ENCODE measurements at regions of chr20 and their contacts with region 1.

Region 1: GRCh38 chr20:45798935-45799642 is 7.3 kb downstream of the DNTTIP1 start:
- DNase-seq: peak; percentile 11 to 67
- ATAC-seq: peak; percentile 89
- H3K4me3 ChIP-seq: no peak overlapping the region
- H3K27ac ChIP-seq: no peak overlapping the region
- H3K4me1 ChIP-seq: no peaks in the 10 kb centered on the region
- H3K27me3 ChIP-seq: no peaks in the 10 kb centered on the region

Region 2: GRCh38 chr20:45833030-45833882 is 34.2 kb after region 1 on chr20 and contains the start of gene SNX21:
- intact Hi-C with region 1: loop called in 1 of 2 experiments (anchors 5 kb)
- DNase-seq: peak; percentile 91 to 94
- ATAC-seq: peak; percentile 92
- H3K4me3 ChIP-seq: peak within 1 kb of the TSS; percentile 62 to 75
- H3K27ac ChIP-seq: peak within 1 kb of the TSS; percentile 71 to 92
- H3K4me1 ChIP-seq: peaks cover 0 to 1% of the 10 kb centered on the region in 2 donors
- H3K27me3 ChIP-seq: no peaks in the 10 kb centered on the region
- total RNA-seq, gene SNX21: 36.2 to 57.7 TPM

Region 3: GRCh38 chr20:45890985-45891983 is 92.2 kb after region 1 on chr20 and contains the starts of genes CTSA and NEURL2:
- intact Hi-C with region 1: loop called (anchors 5 kb)
- DNase-seq: peak; percentile 94 to 97
- ATAC-seq: peak; percentile 93
- H3K4me3 ChIP-seq: peak within 1 kb of the TSS; percentile 42 to 55
- H3K27ac ChIP-seq: peak within 1 kb of the TSS in 1 of 2 donors; percentile 50
- H3K4me1 ChIP-seq: no peaks in the 10 kb centered on the region
- H3K27me3 ChIP-seq: no peaks in the 10 kb centered on the region
- total RNA-seq, gene CTSA: 83.4 to 140 TPM
- total RNA-seq, gene NEURL2: 9.9 to 32.9 TPM

Region 4: GRCh38 chr20:45934586-45935415 is 135.7 kb after region 1 on chr20 and contains the start of gene PCIF1:
- intact Hi-C with region 1: loop called in 1 of 2 experiments (anchors 10 kb)
- DNase-seq: peak; percentile 99
- ATAC-seq: peak; percentile 96
- H3K4me3 ChIP-seq: peak within 1 kb of the TSS; percentile 59 to 77
- H3K27ac ChIP-seq: peak within 1 kb of the TSS; percentile 80 to 81
- H3K4me1 ChIP-seq: no peaks in the 10 kb centered on the region
- H3K27me3 ChIP-seq: no peaks in the 10 kb centered on the region
- total RNA-seq, gene PCIF1: 32.5 to 33.3 TPM

Region 5: DNA sequence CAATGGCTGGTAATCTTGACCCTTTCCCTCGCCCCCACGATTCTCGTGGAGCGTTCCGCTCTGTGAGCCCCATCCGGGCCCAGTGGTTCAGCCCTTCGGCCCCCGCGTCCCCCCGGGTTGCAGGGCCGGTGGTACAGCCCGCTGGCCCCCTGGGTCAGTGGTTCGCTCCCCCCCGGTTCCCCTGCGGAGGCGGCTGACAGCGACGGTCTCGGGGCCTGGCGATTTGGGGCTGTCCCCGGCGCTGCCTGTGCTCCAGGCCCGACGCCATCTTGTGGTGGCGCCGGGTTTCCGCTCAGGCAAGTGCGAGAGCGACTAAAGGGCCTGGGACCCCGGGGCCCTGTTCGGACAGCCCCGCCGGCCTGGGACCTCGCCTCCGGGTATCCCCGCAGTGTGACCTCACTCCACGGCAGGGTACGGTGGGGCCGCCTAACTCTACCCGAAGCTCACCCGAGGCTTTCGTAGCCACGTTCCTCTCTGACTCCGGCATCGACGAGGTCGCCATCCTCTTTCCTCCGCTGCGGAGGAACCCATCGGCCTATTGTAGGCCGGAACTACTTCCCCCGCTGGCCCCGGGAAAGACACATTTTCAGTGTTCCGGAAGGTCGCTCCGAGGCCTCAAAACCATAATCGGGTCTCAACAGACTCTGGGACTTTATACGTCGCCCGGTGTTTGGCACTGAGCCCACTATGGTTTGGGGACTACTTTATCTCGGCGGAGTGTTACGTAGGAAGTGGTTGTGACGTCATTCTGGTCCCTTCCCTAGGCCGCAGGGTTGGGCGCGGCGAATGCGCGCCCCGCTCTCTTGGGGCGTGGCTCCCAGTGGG is 172.8 kb after region 1 on chr20 and contains the start of gene ZNF335:
- intact Hi-C with region 1: loop called in 1 of 2 experiments (anchors 5 kb)
- DNase-seq: peak; percentile 97 to 98
- ATAC-seq: peak; percentile 97
- H3K4me3 ChIP-seq: peak within 1 kb of the TSS; percentile 42 to 67
- H3K27ac ChIP-seq: peak within 1 kb of the TSS; percentile 69 to 87
- H3K4me1 ChIP-seq: no peaks in the 10 kb centered on the region
- H3K27me3 ChIP-seq: no peaks in the 10 kb centered on the region
- total RNA-seq, gene ZNF335: 18.4 to 22.7 TPM

Region 6: GRCh38 chr20:46004889-46005473 is 205.9 kb after region 1 on chr20:
- intact Hi-C with region 1: no loop called
- DNase-seq: peak in 1 of 2 donors; percentile 74
- ATAC-seq: no peak
- H3K4me3 ChIP-seq: no peak overlapping the region
- H3K27ac ChIP-seq: no peak overlapping the region
- H3K4me1 ChIP-seq: no peaks in the 10 kb centered on the region
- H3K27me3 ChIP-seq: no peaks in the 10 kb centered on the region

Region 7: DNA sequence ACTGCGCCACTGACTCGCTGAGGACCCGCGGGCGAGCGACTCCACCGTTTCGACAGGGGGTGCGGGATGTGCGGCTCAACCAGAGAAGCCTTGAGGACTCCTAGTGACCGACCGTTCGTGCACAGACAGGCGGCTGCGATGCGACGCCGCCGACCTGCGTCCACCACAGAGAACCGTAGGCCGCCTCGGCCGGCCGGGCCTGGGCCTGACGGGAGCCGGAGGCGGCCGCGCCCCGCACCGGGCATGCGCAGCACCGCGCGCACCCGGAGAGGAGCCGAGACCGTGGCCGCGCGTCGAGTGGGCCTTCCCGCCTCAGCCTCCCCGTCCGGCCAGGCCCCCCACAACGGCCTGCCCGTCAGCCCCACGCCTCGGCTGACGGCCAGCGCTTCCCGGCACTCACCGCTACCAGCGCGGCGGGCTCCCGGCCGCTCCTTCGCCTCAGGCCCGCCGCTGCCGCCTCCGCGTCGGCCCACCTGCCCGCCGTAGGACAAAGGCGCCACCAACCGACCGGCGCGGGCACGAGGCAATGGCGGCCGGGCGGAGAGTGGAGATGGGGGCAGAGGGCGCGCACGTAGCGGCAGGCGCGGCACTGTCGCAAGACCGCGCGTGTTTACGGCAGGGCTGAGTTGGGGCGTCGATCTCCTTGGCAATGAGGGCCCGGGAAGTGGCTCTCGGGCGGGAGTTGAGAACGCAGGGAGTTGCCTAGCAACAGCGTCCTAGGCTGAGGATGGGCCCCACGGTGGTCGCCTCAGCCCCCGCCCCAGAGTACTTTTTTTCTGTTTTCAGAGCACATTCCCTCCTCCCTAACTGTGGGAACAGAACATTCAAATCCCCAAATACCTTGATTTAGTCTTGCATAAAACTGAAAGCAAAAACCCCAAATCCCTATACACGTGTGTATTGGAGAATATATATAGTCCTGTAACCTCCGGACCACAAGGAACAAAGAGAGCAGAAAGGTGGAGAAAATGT is 290.6 kb after region 1 on chr20 and contains the start of gene NCOA5:
- intact Hi-C with region 1: loop called in 1 of 2 experiments (anchors 10 kb)
- DNase-seq: peak; percentile 98 to 99
- ATAC-seq: peak; percentile 97
- H3K4me3 ChIP-seq: peak within 1 kb of the TSS; percentile 73 to 78
- H3K27ac ChIP-seq: peak within 1 kb of the TSS; percentile 91 to 95
- H3K4me1 ChIP-seq: peaks cover 4 to 5% of the 10 kb centered on the region in 2 donors
- H3K27me3 ChIP-seq: no peaks in the 10 kb centered on the region
- total RNA-seq, gene NCOA5: 18.6 to 23.7 TPM

Measured in aorta (tissue), 5 donors.